ENCODE measurements at regions of chr6 and their contacts with region 1.

Region 1: GRCh38 chr6:90098001-90098531 is 198.6 kb downstream of the BACH2 start:
- DNase-seq: peak; percentile 63 to 95
- H3K4me3 ChIP-seq: peak overlapping the region in 1 of 2 donors; percentile 9
- H3K27ac ChIP-seq: peak overlapping the region; percentile 89 to 93
- H3K4me1 ChIP-seq: peaks cover 4 to 46% of the 10 kb centered on the region in 2 donors
- H3K27me3 ChIP-seq: no peaks in the 10 kb centered on the region
- CTCF ChIP-seq: peak; percentile 26 to 59 (median 48)

Region 2: GRCh38 chr6:89829591-89830385 is 268.3 kb before region 1 on chr6 and contains the start of gene CASP8AP2:
- intact Hi-C with region 1: loop called (anchors 5 kb)
- DNase-seq: peak; percentile 90 to 98
- H3K4me3 ChIP-seq: peak within 1 kb of the TSS; percentile 71 to 73
- H3K27ac ChIP-seq: peak within 1 kb of the TSS; percentile 85 to 89
- H3K4me1 ChIP-seq: peaks cover 0 to 11% of the 10 kb centered on the region in 2 donors
- H3K27me3 ChIP-seq: no peaks in the 10 kb centered on the region
- CTCF ChIP-seq: no peak
- total RNA-seq, gene CASP8AP2: 6.7 TPM

Region 3: DNA sequence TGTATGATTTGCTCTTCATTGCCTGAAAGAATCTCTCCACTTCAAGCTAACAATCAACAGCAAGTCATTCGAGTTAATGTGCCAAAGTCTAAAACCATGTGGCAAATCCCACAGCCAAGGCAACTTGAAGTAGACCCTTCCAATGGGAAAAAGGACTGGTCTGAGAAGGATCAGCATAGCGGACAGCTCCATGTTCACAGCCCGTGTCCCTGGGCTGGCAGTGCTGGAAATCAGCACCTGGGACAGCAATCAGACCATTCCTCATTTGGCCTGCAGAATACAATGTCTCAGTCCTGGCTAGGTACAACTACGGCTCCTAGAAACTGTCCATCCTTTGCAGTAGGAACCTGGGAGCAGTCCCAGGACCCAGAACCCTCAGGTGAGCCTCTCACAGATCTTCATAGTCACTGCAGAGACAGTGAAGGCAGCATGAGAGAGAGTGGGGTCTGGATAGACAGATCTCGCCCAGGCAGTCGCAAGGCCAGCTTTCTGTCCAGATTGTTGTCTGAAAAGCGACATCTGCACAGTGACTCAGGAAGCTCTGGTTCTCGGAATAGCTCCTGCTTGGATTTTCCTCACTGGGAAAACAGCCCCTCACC is 202.7 kb before region 1 on chr6:
- intact Hi-C with region 1: no loop called
- DNase-seq: no peak
- H3K4me3 ChIP-seq: no peak overlapping the region
- H3K27ac ChIP-seq: no peak overlapping the region
- H3K4me1 ChIP-seq: no peaks in the 10 kb centered on the region
- H3K27me3 ChIP-seq: no peaks in the 10 kb centered on the region
- CTCF ChIP-seq: no peak

Region 4: GRCh38 chr6:90053614-90054013 is 44.5 kb before region 1 on chr6:
- intact Hi-C with region 1: no loop called
- DNase-seq: no peak
- H3K4me3 ChIP-seq: no peak overlapping the region
- H3K27ac ChIP-seq: no peak overlapping the region
- H3K4me1 ChIP-seq: no peaks in the 10 kb centered on the region
- H3K27me3 ChIP-seq: no peaks in the 10 kb centered on the region
- CTCF ChIP-seq: no peak

Region 5: GRCh38 chr6:90121982-90122381 is 23.9 kb after region 1 on chr6:
- intact Hi-C with region 1: loop called (anchors 2 kb)
- DNase-seq: peak in 1 of 2 donors; percentile 76
- H3K4me3 ChIP-seq: no peak overlapping the region
- H3K27ac ChIP-seq: peak overlapping the region; percentile 27 to 60
- H3K4me1 ChIP-seq: peaks cover 0 to 23% of the 10 kb centered on the region in 2 donors
- H3K27me3 ChIP-seq: no peaks in the 10 kb centered on the region
- CTCF ChIP-seq: no peak

Region 6: DNA sequence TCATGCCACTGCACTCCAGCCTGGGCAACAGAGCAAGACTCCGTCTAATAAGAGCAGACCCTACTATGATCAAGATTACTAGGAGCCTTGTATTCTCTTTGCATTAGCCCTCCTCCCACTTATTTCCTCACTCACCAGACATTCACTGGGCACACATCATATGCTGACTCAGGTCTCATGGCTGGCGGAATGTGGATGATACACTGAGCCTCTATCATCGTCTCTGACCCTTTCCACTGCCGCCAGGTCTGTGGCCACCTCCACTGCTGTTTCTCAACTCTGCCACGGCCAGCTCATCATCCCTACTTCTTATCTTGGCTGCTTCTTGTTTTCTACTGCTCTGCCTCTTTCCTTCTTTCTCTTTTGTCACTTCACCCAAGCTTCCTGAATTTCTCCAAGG is 37.6 kb after region 1 on chr6:
- intact Hi-C with region 1: no loop called
- DNase-seq: no peak
- H3K4me3 ChIP-seq: no peak overlapping the region
- H3K27ac ChIP-seq: no peak overlapping the region
- H3K4me1 ChIP-seq: peaks cover 0 to 24% of the 10 kb centered on the region in 2 donors
- H3K27me3 ChIP-seq: no peaks in the 10 kb centered on the region
- CTCF ChIP-seq: no peak

Region 7: GRCh38 chr6:90146921-90147649 is 49.0 kb after region 1 on chr6:
- intact Hi-C with region 1: no loop called
- DNase-seq: no peak
- H3K4me3 ChIP-seq: no peak overlapping the region
- H3K27ac ChIP-seq: no peak overlapping the region
- H3K4me1 ChIP-seq: no peaks in the 10 kb centered on the region
- H3K27me3 ChIP-seq: no peaks in the 10 kb centered on the region
- CTCF ChIP-seq: no peak

Region 8: DNA sequence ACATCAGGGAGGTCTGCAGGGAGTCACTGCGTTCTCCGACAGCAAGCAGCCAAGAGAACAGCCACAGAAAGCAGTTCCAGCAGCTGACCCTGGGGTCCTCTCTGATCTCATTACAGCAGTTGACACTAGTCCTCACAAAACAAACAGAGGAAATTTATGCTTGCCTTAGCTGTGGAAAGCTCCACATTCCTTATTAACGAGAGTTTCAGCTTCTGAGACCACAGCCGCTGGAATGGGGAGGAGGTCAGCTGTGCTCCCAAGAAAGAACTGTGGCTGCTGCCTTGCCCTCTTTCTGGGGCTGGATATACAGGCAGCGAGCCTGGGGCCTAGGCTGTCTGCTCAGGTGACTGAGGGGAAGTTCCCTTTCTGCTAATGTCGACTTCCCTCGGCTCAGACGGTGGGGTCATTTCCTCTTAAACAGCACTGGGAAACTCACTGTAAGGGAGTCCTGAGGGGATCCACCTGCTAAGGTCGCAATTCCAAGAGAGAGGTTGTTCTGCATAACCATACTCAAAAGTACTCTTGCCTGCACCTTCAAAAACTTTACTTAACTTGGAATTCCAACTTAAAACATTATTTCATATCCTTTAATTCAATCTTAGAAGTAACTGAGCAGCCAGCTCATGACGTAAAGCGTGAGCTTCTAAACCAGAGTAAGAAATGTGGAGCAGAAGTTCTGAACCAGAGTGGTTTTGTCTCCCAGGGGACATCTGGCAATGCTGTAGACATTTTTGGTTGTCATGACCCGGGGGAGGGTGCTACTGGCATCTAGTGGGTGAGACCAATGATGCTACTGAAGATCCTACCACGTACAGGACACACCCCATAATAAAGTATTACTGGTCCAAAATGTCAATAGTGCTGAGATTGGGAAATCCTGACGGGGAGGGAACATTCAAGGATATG is 118.3 kb after region 1 on chr6:
- intact Hi-C with region 1: loop called (anchors 1 kb)
- DNase-seq: no peak
- H3K4me3 ChIP-seq: no peak overlapping the region
- H3K27ac ChIP-seq: peak overlapping the region; percentile 51 to 81
- H3K4me1 ChIP-seq: peaks cover 3 to 28% of the 10 kb centered on the region in 2 donors
- H3K27me3 ChIP-seq: no peaks in the 10 kb centered on the region
- CTCF ChIP-seq: no peak

Region 9: GRCh38 chr6:90393232-90393884 is 295.3 kb after region 1 on chr6:
- intact Hi-C with region 1: loop called (anchors 5 kb)
- DNase-seq: peak in 1 of 2 donors; percentile 78
- H3K4me3 ChIP-seq: no peak overlapping the region
- H3K27ac ChIP-seq: no peak overlapping the region
- H3K4me1 ChIP-seq: no peaks in the 10 kb centered on the region
- H3K27me3 ChIP-seq: no peaks in the 10 kb centered on the region
- CTCF ChIP-seq: peak; percentile 67 to 85 (median 76)

Measured in ascending aorta (tissue), 2 donors.